Body of pancreas (tissue), 4 donors: ENCODE measurements at regions of chr18 and their contacts with region 1.

Region 1: GRCh38 chr18:11553098-11553940 is 56.1 kb upstream of the SLC35G4 start:
- DNase-seq: peak; percentile 25 to 41 (median 40)
- ATAC-seq: no peak
- H3K4me3 ChIP-seq: no peak overlapping the region
- H3K27ac ChIP-seq: no peak overlapping the region
- H3K4me1 ChIP-seq: no peaks in the 10 kb centered on the region
- H3K27me3 ChIP-seq: no peaks in the 10 kb centered on the region
- CTCF ChIP-seq: peak; percentile 48 to 90 (median 72)
- POLR2A ChIP-seq: no peak

Region 2: DNA sequence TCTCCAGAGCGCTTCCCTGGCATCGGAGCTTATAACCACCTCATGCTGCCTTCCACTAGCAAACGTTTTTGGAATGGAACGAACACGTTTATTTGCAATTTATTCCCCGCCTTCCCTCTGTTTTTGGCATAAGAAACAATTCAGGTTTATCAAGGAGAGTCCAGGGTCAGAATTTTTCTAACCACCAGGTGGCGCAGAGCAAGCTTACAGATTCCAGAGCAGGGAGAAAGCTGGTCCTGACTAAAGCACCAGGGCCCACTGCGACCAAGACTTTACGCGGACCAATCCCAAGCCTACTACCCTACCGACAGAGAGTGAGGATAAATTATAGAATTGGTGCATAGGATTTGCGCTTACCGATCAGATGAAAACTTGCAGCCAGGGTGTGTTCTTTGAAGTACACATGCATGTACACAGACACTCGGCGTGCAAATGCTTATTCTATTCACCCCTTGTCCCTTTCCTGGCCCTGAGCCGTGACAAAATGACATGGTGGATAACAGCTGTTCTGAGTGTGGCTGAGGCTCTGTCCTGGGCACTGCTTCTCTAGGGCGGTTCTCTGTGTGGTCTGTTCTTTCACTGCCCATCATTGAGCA is 992.8 kb before region 1 on chr18:
- intact Hi-C with region 1: loop called (anchors 10 kb)
- DNase-seq: peak; percentile 76 to 86 (median 81)
- ATAC-seq: peak; percentile 79
- H3K4me3 ChIP-seq: no peak overlapping the region
- H3K27ac ChIP-seq: peak overlapping the region in 3 of 4 donors; percentile 4 to 36 (median 10)
- H3K4me1 ChIP-seq: peaks cover 11% of the 10 kb centered on the region
- H3K27me3 ChIP-seq: no peaks in the 10 kb centered on the region
- CTCF ChIP-seq: peak; percentile 76 to 81 (median 76)
- POLR2A ChIP-seq: no peak